ENCODE measurements at regions of chrX and their contacts with region 1.

Region 1: DNA sequence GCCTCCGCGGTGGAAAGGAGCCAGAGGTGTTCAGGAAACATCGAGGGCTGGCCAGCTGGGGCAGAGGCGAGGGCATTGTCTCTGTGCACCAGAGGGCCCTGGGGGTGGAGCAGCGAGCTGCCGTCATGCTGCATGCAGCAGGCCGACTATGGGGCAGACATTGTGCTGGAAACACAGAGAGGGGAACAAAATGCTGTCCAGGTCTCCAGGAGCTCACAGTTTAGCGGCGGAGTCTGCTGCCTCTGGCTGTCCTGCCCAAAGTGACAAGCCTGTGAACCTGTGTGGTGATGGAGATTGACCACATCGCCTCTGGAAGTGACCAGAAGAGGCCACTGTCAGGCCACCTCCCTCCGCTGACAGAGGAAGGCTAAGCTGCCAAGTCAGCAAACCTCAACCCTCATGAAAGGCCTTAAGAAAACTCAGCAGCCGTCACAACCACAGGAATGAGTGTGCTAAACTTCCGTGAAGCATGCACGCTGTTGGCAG is 20.1 kb upstream of the SASH3 start:
- DNase-seq: peak; percentile 63 to 73 (median 69)
- H3K4me3 ChIP-seq: no peak overlapping the region
- H3K4me3 Mint-ChIP-seq: peak overlapping the region; percentile 58 to 78 (median 67)
- H3K27ac ChIP-seq: peak overlapping the region; percentile 54
- H3K27ac Mint-ChIP-seq: peak overlapping the region; percentile 84 to 95 (median 91)
- H3K4me1 ChIP-seq: peaks cover 82% of the 10 kb centered on the region
- H3K4me1 Mint-ChIP-seq: peaks cover 39 to 76% (median 56%) of the 10 kb centered on the region in 4 donors
- H3K27me3 ChIP-seq: no peaks in the 10 kb centered on the region
- H3K27me3 Mint-ChIP-seq: no peaks in the 10 kb centered on the region

Region 2: GRCh38 chrX:129701624-129702069 is 58.0 kb before region 1 on chrX:
- CTCF ChIA-PET with region 1: no interaction called
- POLR2A ChIA-PET with region 1: no interaction called
- intact Hi-C with region 1: no loop called
- DNase-seq: no peak
- H3K4me3 ChIP-seq: no peak overlapping the region
- H3K4me3 Mint-ChIP-seq: no peak overlapping the region
- H3K27ac ChIP-seq: no peak overlapping the region
- H3K27ac Mint-ChIP-seq: no peak overlapping the region
- H3K4me1 ChIP-seq: no peaks in the 10 kb centered on the region
- H3K4me1 Mint-ChIP-seq: no peaks in the 10 kb centered on the region
- H3K27me3 ChIP-seq: no peaks in the 10 kb centered on the region
- H3K27me3 Mint-ChIP-seq: no peaks in the 10 kb centered on the region

Region 3: GRCh38 chrX:129772796-129773431 is 13.3 kb after region 1 on chrX:
- CTCF ChIA-PET with region 1: interaction called, 21 read pairs
- POLR2A ChIA-PET with region 1: interaction called, 1,390 read pairs
- intact Hi-C with region 1: loop called (anchors 1 kb)
- DNase-seq: peak in 2 of 5 donors; percentile 31 to 69
- H3K4me3 ChIP-seq: no peak overlapping the region
- H3K4me3 Mint-ChIP-seq: peak overlapping the region in 7 of 8 donors; percentile 59 to 84 (median 72)
- H3K27ac ChIP-seq: peak overlapping the region; percentile 26
- H3K27ac Mint-ChIP-seq: peak overlapping the region; percentile 86 to 96 (median 94)
- H3K4me1 ChIP-seq: peaks cover 92% of the 10 kb centered on the region
- H3K4me1 Mint-ChIP-seq: peaks cover 45 to 92% (median 69%) of the 10 kb centered on the region in 4 donors
- H3K27me3 ChIP-seq: no peaks in the 10 kb centered on the region
- H3K27me3 Mint-ChIP-seq: no peaks in the 10 kb centered on the region

Region 4: GRCh38 chrX:129798888-129799287 is 39.3 kb after region 1 on chrX:
- CTCF ChIA-PET with region 1: interaction called, 6 read pairs
- POLR2A ChIA-PET with region 1: interaction called, 1,390 read pairs
- intact Hi-C with region 1: loop called (anchors 5 kb)
- DNase-seq: no peak
- H3K4me3 ChIP-seq: no peak overlapping the region
- H3K4me3 Mint-ChIP-seq: no peak overlapping the region
- H3K27ac ChIP-seq: no peak overlapping the region
- H3K27ac Mint-ChIP-seq: peak overlapping the region; percentile 18 to 58 (median 32)
- H3K4me1 ChIP-seq: peaks cover 7% of the 10 kb centered on the region
- H3K4me1 Mint-ChIP-seq: peaks cover 2 to 17% (median 9%) of the 10 kb centered on the region in 4 donors
- H3K27me3 ChIP-seq: no peaks in the 10 kb centered on the region
- H3K27me3 Mint-ChIP-seq: no peaks in the 10 kb centered on the region

Measured in CD4-positive, alpha-beta memory T cell (primary cell).